ENCODE measurements at regions of chr20 and their contacts with region 1.

Region 1: GRCh38 chr20:44414808-44415207 is 59.3 kb downstream of the HNF4A start:
- DNase-seq: no peak
- H3K4me3 ChIP-seq: no peak overlapping the region
- H3K4me3 Mint-ChIP-seq: no peak overlapping the region
- H3K27ac Mint-ChIP-seq: peak overlapping the region; percentile 14
- H3K4me1 ChIP-seq: peaks cover 53% of the 10 kb centered on the region
- H3K4me1 Mint-ChIP-seq: peaks cover 38% of the 10 kb centered on the region
- H3K27me3 ChIP-seq: no peaks in the 10 kb centered on the region
- H3K27me3 Mint-ChIP-seq: no peaks in the 10 kb centered on the region
- CTCF ChIP-seq: no peak

Region 2: DNA sequence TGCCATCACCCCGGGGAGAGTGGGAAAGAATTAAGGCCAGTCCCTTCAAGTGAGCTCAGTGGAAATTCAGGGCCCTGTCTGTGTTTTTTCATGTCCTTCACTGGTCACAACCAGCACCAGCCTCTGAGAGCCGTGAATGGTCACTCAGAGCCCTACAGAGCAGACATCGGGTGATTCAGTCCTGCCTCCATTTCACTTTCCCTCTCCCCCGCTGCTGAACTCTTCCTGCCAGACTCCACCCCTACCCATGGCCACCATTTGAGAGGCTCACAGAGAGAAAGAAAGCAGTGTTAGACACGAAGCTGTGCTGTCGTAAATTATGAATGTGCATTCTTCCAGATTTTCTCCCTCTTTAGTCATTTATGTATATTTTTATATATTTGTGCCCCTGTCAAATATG is 72.6 kb before region 1 on chr20:
- CTCF ChIA-PET with region 1: interaction called, 11 read pairs
- POLR2A ChIA-PET with region 1: no interaction called
- intact Hi-C with region 1: no loop called
- DNase-seq: no peak
- H3K4me3 ChIP-seq: no peak overlapping the region
- H3K4me3 Mint-ChIP-seq: no peak overlapping the region
- H3K27ac Mint-ChIP-seq: peak overlapping the region; percentile 4
- H3K4me1 ChIP-seq: peaks cover under 1% of the 10 kb centered on the region
- H3K4me1 Mint-ChIP-seq: peaks cover 7% of the 10 kb centered on the region
- H3K27me3 ChIP-seq: no peaks in the 10 kb centered on the region
- H3K27me3 Mint-ChIP-seq: no peaks in the 10 kb centered on the region
- CTCF ChIP-seq: no peak

Region 3: GRCh38 chr20:44465001-44465560 is 50.3 kb after region 1 on chr20:
- CTCF ChIA-PET with region 1: no interaction called
- POLR2A ChIA-PET with region 1: no interaction called
- intact Hi-C with region 1: no loop called
- DNase-seq: no peak
- H3K4me3 ChIP-seq: no peak overlapping the region
- H3K4me3 Mint-ChIP-seq: no peak overlapping the region
- H3K27ac Mint-ChIP-seq: no peak overlapping the region
- H3K4me1 ChIP-seq: no peaks in the 10 kb centered on the region
- H3K4me1 Mint-ChIP-seq: no peaks in the 10 kb centered on the region
- H3K27me3 ChIP-seq: no peaks in the 10 kb centered on the region
- H3K27me3 Mint-ChIP-seq: no peaks in the 10 kb centered on the region
- CTCF ChIP-seq: no peak

Region 4: GRCh38 chr20:44495257-44495656 is 80.4 kb after region 1 on chr20:
- CTCF ChIA-PET with region 1: no interaction called
- POLR2A ChIA-PET with region 1: no interaction called
- intact Hi-C with region 1: no loop called
- DNase-seq: peak in 1 of 2 experiments; percentile 40
- H3K4me3 ChIP-seq: no peak overlapping the region
- H3K4me3 Mint-ChIP-seq: no peak overlapping the region
- H3K27ac Mint-ChIP-seq: no peak overlapping the region
- H3K4me1 ChIP-seq: peaks cover 8% of the 10 kb centered on the region
- H3K4me1 Mint-ChIP-seq: no peaks in the 10 kb centered on the region
- H3K27me3 ChIP-seq: no peaks in the 10 kb centered on the region
- H3K27me3 Mint-ChIP-seq: no peaks in the 10 kb centered on the region
- CTCF ChIP-seq: no peak

Region 5: GRCh38 chr20:44738813-44739477 is 324.1 kb after region 1 on chr20:
- CTCF ChIA-PET with region 1: no interaction called
- POLR2A ChIA-PET with region 1: no interaction called
- intact Hi-C with region 1: no loop called
- DNase-seq: peak; percentile 96 to 98
- H3K4me3 ChIP-seq: no peak overlapping the region
- H3K4me3 Mint-ChIP-seq: peak overlapping the region; percentile 56
- H3K27ac Mint-ChIP-seq: no peak overlapping the region
- H3K4me1 ChIP-seq: peaks cover 12% of the 10 kb centered on the region
- H3K4me1 Mint-ChIP-seq: peaks cover 16% of the 10 kb centered on the region
- H3K27me3 ChIP-seq: no peaks in the 10 kb centered on the region
- H3K27me3 Mint-ChIP-seq: no peaks in the 10 kb centered on the region
- CTCF ChIP-seq: no peak